Head of caudate nucleus (tissue), 42 donors: ENCODE measurements at regions of chr4 and their contacts with region 1.

Region 1: DNA sequence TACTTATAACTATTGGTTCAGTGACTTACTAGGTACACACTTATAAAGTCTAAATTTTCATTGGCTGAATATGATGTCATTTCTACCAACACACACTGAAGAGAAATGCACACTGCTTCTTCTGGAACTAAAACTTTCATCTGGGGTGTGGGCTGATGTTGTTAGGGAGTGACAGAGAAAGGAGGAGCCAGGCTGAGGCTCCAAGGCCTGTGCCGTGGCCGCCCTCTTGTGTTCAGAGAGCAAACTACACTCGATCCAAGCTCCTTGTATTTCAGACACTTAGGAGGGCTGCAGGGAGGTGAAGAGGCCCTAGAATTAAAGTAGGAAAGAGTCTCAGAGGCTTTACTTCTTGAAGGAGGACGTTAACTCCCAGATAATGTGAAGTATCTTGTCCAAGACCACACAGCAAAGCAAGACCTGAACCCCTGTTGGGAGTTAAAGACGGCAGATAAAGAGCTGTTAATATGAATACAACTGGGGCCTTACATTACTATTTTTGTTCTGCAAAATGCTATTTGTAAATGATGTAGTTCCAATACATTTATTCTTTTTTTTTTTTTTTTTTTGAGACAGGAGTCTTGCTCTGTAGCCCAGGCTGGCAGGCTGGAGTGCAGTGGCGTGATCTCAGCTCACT is 137.5 kb downstream of the AFAP1 start:
- DNase-seq: peak; percentile 73 to 95 (median 89)

Region 2: GRCh38 chr4:7761720-7762119 is 40.5 kb before region 1 on chr4:
- intact Hi-C with region 1: loop called (anchors 5 kb)
- DNase-seq: peak; percentile 40 to 87 (median 76)

Region 3: GRCh38 chr4:7987148-7987989 is 185.2 kb after region 1 on chr4:
- intact Hi-C with region 1: loop called (anchors 2 kb)
- DNase-seq: peak; percentile 50 to 90 (median 78)